Motor neuron (in vitro differentiated cells): ENCODE measurements at regions of chr22 and their contacts with region 1.

Region 1: DNA sequence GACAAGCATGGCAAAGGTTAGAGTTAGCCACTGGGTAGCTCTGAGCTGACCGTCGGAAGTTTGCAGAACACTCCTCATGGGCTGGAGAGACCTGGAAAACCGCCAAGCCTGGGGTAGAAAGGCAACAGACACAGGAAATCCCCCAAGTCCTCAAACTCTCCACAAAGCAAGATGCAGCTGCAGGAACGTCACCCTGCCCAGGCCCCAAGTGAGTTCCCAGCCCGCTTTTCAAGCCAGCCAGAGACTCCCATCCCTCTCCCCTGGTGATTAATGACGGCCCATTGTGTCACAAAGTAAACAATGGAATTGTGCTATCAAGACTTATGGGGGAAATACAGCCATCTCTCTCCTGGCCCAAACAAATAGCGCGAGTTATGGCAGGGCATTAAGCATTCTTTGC is 633.0 kb downstream of the TBC1D22A start:
- ATAC-seq: peak in 3 of 8 experiments; percentile 44 to 93 (median 46)
- H3K4me3 ChIP-seq: no peak overlapping the region
- H3K27ac ChIP-seq: no peak overlapping the region
- H3K4me1 ChIP-seq: no peaks in the 10 kb centered on the region

Region 2: GRCh38 chr22:46303347-46303965 is 1092.0 kb before region 1 on chr22:
- in situ Hi-C with region 1: no loop called
- ATAC-seq: no peak
- H3K4me3 ChIP-seq: no peak overlapping the region
- H3K27ac ChIP-seq: no peak overlapping the region
- H3K4me1 ChIP-seq: no peaks in the 10 kb centered on the region

Region 3: DNA sequence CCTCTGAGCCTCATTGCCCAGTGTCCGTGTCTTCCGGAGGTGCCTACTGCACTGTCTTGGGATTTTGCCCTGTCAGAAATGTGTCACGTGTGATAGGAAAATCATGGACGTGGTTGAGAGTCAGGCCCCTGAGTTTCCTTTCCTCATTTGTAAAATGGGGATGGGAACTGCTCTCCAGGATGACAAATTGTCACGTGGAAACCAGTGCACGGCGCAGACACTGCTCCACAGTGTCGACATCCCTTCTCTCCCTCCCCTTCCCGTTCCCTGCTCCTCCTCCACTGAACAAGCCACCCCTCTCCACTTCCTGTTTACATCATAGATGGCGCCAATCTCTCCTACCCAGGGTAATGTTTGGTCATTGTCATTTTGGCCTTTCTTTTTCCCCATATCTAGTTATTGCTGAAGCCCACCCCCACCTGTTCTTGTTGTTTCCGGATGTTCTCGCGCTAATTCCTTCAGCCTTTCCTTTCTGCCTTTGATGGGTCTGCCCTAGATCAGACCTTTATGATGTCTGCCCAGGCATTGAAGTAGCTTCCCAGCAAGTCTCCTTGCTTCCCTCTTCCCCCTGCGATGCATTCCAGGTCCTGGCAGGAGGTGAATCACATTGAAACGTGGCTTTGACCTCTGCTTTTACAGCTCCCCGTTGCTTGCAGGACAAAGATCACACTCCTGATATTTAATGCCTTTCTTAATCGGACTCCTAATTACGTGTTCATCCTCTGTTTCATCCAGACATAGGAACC is 541.2 kb before region 1 on chr22:
- in situ Hi-C with region 1: no loop called
- ATAC-seq: peak in 5 of 8 experiments; percentile 64 to 94 (median 72)
- H3K4me3 ChIP-seq: no peak overlapping the region
- H3K27ac ChIP-seq: no peak overlapping the region
- H3K4me1 ChIP-seq: peaks cover 1 to 7% of the 10 kb centered on the region in 2 donors

Region 4: DNA sequence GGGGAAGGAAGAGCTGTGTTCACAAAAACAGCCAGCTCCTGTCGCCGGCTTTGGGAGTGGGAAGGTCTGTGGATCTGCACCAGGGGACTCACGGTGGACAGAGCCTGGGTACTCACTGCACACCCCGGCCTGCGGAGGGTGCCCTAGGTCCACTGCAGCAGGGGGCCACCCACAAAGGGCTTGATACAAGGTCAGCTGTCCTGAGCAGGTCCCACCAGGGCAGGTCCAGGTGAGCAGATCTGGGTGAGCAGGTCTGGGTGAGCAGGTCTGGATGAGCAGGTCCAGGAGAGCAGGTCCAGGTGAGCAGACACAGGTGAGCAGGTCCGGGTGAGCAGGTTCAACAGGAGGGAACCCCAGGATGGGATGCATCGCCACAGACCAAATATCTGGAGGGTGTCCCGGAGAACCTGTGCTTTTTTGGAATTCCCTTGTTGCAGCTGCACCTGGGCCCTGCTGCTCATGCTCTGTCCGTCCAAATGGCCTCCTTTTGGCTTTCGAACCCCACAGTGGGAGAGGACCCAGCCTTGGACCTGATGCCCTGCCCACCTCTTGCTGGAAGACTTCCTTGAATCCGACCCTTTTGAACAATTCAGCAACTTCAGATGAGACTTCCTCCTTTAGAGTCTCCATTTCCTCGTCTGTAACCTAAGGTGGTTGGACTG is 147.8 kb before region 1 on chr22:
- in situ Hi-C with region 1: loop called in 1 of 9 experiments (anchors 25 kb)
- ATAC-seq: peak in 1 of 8 experiments; percentile 67
- H3K4me3 ChIP-seq: no peak overlapping the region
- H3K27ac ChIP-seq: no peak overlapping the region
- H3K4me1 ChIP-seq: no peaks in the 10 kb centered on the region